ENCODE measurements at regions of chr1 and their contacts with region 1.

Region 1: GRCh38 chr1:155167166-155168104 is 5.7 kb downstream of the KRTCAP2 start:
- DNase-seq: peak; percentile 90 to 94 (median 92)
- H3K4me3 ChIP-seq: peak overlapping the region; percentile 16 to 71 (median 53)
- H3K27ac ChIP-seq: peak overlapping the region; percentile 34 to 95 (median 88)
- H3K27me3 ChIP-seq: no peaks in the 10 kb centered on the region
- CTCF ChIP-seq: peak; percentile 80 to 98 (median 87)

Region 2: DNA sequence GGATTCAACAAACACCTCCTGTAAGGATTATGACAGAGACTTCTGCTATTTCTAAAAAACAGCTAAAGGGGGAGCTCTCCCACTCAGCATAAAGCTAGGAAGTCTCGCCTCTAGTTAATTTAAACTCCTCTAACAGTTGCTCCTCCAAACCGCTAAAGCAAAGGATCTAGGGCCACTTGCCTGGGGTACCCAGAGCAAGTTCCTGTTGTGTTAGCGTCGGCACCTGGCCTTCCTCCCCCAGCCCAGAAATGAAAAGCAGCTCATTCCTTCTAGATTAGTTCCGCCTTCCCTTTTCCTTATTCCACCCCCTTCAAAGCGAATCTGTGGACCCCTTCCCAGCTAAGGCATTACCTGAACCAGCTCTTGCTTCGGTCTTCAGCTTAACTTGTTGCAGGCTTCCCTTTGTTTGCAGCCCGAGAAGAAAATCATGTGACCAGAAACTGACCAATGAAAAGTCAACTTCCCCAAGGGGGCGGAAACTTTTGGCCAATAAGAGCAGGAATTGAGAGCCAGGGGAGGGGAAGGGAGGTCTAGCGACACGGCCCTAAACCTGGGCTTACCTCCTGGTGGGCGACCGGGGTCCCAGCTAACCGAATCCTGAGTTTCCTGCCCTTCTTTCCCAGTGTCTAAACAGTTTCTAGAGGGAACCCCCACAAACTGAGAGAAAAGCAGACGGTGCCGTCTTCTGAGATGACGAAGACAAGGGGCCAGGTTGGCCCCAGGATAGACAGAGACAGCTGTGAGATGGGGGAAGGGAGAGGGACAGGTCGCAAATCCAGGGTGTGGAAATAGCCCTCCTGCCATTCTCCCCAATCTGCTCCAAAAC is 211.5 kb before region 1 on chr1 and contains the start of gene PBXIP1:
- intact Hi-C with region 1: no loop called
- DNase-seq: peak in 8 of 10 donors; percentile 52 to 82 (median 70)
- H3K4me3 ChIP-seq: peak within 1 kb of the TSS; percentile 37 to 88 (median 69)
- H3K27ac ChIP-seq: peak within 1 kb of the TSS; percentile 18 to 95 (median 84)
- H3K27me3 ChIP-seq: no peaks in the 10 kb centered on the region
- CTCF ChIP-seq: peak in 44 of 56 donors; percentile 4 to 50 (median 30)
- total RNA-seq, gene PBXIP1: 40.2 to 244 (median 96.9) TPM

Region 3: GRCh38 chr1:155091071-155091709 is 76.2 kb before region 1 on chr1:
- intact Hi-C with region 1: loop called (anchors 1 kb)
- DNase-seq: peak; percentile 70 to 88 (median 77)
- H3K4me3 ChIP-seq: peak overlapping the region in 36 of 59 donors; percentile 1 to 43 (median 25)
- H3K27ac ChIP-seq: peak overlapping the region in 13 of 59 donors; percentile 13 to 94 (median 58)
- H3K27me3 ChIP-seq: no peaks in the 10 kb centered on the region
- CTCF ChIP-seq: peak; percentile 90 to 100 (median 99)

Region 4: DNA sequence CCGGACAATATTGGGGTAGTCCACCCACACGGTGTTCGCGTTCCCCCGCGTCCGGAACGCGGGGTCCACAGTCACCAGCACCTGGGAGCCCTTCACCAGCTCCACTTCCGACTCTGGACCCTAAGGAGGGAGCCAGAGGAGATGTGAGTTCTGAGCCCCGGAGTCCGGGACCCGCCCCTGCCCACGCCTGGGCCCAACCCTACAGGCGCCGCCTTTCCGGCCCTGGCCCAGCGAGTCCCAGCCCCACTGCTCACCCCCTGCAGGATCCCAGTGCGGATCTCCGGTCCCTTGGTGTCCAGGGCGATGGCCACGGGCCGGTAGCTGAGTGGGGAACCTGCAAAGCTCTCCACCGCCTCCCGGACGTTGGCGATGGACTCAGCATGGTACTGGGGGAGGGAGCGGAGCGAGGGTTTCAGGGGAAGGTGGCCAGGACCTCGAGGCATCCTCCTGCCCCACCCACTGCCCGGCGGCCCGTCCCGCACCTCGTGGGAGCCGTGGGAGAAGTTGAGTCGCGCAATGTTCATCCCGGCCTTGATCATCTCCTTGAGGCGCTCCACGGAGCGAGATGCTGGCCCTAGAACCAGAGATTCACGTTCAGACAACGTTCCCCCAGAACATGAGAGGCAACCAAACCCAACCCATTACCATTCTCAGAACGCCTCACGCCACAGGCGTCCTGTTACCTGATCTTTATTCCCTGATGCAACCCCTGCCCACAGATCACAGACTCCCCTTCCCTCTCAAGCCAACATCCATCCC is 127.9 kb after region 1 on chr1:
- intact Hi-C with region 1: no loop called
- DNase-seq: peak in 1 of 10 donors; percentile 12
- H3K4me3 ChIP-seq: peak overlapping the region in 50 of 59 donors; percentile 3 to 64 (median 40)
- H3K27ac ChIP-seq: no peak overlapping the region
- H3K27me3 ChIP-seq: peaks cover 0 to 28% (median 11%) of the 10 kb centered on the region in 45 donors
- CTCF ChIP-seq: no peak

Measured in dorsolateral prefrontal cortex (tissue), 120 donors.